ENCODE measurements at regions of chr2 and their contacts with region 1.

Region 1: DNA sequence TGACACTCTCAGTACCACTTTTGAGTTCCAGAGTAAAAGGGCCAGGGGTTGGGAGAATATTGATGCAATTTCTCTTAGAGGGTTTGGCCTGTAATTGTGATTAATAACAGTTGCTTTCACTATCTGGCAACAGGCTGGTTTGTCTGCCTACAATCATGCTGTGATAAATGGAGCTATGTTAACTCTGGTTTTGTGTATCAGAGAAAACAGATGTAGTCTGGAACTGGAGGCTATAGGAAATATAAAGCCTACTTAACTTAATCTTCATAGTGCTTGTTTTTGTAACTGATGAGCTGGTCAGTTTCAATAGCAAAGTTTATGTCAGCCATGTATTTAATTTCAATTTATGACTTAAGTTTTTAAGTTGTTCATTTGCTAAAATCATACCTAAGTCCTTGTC is 138.0 kb downstream of the AGPS start:
- DNase-seq: no peak
- ATAC-seq: no peak
- H3K4me3 ChIP-seq: no peak overlapping the region
- H3K4me3 Mint-ChIP-seq: no peak overlapping the region
- H3K27ac ChIP-seq: no peak overlapping the region
- H3K27ac Mint-ChIP-seq: no peak overlapping the region
- H3K4me1 ChIP-seq: no peaks in the 10 kb centered on the region
- H3K4me1 Mint-ChIP-seq: no peaks in the 10 kb centered on the region
- H3K27me3 ChIP-seq: no peaks in the 10 kb centered on the region
- H3K27me3 Mint-ChIP-seq: no peaks in the 10 kb centered on the region
- CTCF ChIP-seq: no peak

Region 2: DNA sequence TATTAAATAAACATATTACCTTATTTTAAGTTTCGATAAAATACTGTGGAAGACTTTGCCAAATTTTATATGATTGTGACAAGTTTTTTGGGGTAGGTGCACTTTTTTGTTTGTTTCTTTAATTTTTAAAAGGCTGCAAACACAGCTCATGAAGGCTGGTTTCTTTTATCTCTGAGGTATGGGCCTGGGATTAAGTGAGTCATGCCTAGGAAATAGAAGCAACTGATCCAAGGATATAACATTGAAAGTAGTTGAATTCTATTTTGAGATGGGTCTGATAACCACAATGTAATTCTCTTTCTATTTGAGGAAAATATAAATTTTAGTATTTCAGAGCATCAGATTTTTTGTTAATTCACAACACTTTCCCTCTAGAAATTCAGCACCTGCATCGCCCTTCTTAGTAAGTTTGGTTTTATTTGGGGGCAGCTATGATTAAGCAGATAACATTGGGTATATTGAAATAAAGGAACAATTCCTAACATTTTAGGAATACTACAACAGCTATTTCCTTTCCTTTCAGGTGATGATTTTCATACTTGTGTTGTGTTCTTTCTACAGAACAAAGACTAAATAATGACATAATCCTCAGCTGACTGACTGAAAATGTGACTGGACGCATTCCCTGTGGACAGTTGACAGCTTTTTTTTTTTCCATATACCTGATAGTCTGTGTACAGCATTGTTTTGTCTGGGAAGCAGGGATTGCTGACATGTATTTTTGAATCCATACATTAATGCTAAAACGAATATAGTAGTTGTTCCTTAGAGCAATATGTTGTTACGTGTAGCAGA is 598.5 kb after region 1 on chr2:
- CTCF ChIA-PET with region 1: no interaction called
- POLR2A ChIA-PET with region 1: no interaction called
- intact Hi-C with region 1: loop called in 1 of 2 experiments (anchors 10 kb)
- DNase-seq: no peak
- ATAC-seq: no peak
- H3K4me3 ChIP-seq: no peak overlapping the region
- H3K4me3 Mint-ChIP-seq: no peak overlapping the region
- H3K27ac ChIP-seq: no peak overlapping the region
- H3K27ac Mint-ChIP-seq: no peak overlapping the region
- H3K4me1 ChIP-seq: no peaks in the 10 kb centered on the region
- H3K4me1 Mint-ChIP-seq: peaks cover 2% of the 10 kb centered on the region
- H3K27me3 ChIP-seq: no peaks in the 10 kb centered on the region
- H3K27me3 Mint-ChIP-seq: no peaks in the 10 kb centered on the region
- CTCF ChIP-seq: no peak

Region 3: DNA sequence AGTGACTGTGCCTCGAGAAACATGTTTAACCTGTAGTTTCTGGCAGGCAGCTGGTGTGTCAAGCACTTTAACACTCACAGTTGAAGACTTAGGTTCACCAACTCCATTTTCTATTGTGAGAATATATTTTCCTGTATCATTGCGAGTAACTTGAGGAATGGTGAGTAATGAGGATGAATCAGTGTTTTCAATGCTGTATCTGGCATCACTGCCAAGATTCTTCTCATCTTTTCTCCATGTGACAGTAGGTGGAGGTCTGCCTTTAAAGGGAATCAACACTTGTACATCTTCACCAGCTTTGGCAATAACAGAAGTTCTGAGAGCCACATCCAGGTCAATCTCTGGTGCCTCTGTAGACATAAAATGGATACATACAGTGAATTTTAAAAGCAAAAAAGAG is 1022.5 kb after region 1 on chr2:
- CTCF ChIA-PET with region 1: no interaction called
- POLR2A ChIA-PET with region 1: no interaction called
- intact Hi-C with region 1: no loop called
- DNase-seq: no peak
- ATAC-seq: no peak
- H3K4me3 ChIP-seq: no peak overlapping the region
- H3K4me3 Mint-ChIP-seq: no peak overlapping the region
- H3K27ac ChIP-seq: no peak overlapping the region
- H3K27ac Mint-ChIP-seq: no peak overlapping the region
- H3K4me1 ChIP-seq: no peaks in the 10 kb centered on the region
- H3K4me1 Mint-ChIP-seq: no peaks in the 10 kb centered on the region
- H3K27me3 ChIP-seq: no peaks in the 10 kb centered on the region
- H3K27me3 Mint-ChIP-seq: no peaks in the 10 kb centered on the region
- CTCF ChIP-seq: no peak